ENCODE measurements at regions of chr15 and their contacts with region 1.

Region 1: DNA sequence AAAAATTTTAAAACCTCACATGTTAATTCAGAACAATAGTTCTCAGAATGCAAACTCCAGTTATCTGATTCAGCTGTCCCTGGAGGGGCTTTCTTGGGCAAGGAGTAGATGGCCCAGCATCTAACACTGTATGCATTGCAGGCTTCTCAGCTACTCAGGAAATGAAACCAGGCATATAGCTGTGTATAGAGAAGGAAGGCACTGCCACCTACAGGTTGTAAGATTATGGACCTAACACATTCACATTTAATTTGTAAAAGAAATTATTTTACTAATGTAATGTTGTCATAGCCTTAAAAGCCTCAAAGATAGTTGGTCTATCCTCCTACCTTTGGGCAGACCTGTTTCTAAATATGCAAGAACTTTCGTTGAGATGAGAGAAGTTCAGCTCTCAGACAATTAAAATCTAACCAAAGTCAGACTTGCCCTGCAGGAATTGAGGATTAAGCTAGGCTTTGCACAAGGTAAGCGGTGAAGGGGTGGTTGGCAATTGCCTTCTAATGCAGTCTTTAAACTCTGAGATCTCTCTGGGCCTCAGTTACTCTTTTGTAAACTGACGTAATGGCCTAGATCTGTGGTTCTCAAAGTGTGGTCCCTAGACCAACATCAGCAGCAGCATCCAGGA is 132.8 kb upstream of the SLC24A5 start:
- DNase-seq: peak in 2 of 5 donors; percentile 10 to 34
- H3K4me3 ChIP-seq: no peak overlapping the region
- H3K27ac ChIP-seq: no peak overlapping the region
- H3K4me1 ChIP-seq: no peaks in the 10 kb centered on the region
- H3K27me3 ChIP-seq: no peaks in the 10 kb centered on the region
- CTCF ChIP-seq: peak; percentile 69 to 73 (median 70)
- EP300 ChIP-seq: no peak
- POLR2A ChIP-seq: no peak

Region 2: GRCh38 chr15:47196057-47196456 is 792.0 kb before region 1 on chr15:
- intact Hi-C with region 1: loop called (anchors 2 to 10 kb)
- DNase-seq: peak; percentile 77 to 87 (median 81)
- H3K4me3 ChIP-seq: no peak overlapping the region
- H3K27ac ChIP-seq: no peak overlapping the region
- H3K4me1 ChIP-seq: no peaks in the 10 kb centered on the region
- H3K27me3 ChIP-seq: no peaks in the 10 kb centered on the region
- CTCF ChIP-seq: peak; percentile 52 to 85 (median 73)
- EP300 ChIP-seq: no peak
- POLR2A ChIP-seq: no peak

Region 3: DNA sequence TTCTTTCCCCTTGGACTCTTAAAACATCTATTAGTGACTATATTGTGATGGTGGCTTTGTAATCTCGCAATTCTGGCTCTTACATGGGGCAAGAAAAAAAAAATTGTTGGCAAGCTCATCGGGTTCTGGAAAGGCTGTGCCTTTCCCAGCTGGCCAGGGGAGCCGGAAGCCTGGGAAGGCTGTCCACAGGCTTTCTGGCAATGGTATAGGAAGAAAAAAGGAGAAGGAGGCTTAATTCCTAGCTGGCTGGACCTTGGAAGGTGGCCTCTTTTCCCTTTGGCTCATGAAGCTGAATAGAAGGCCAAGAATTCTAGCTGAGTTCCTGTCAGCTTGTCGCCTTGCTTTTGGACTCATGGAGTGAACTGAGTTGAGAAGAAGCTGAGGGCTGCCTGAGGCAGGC is 514.2 kb before region 1 on chr15:
- intact Hi-C with region 1: loop called in 3 of 4 experiments (anchors 5 to 10 kb)
- DNase-seq: peak; percentile 46 to 70 (median 65)
- H3K4me3 ChIP-seq: no peak overlapping the region
- H3K27ac ChIP-seq: peak overlapping the region in 1 of 2 donors; percentile 64
- H3K4me1 ChIP-seq: peaks cover 8% of the 10 kb centered on the region
- H3K27me3 ChIP-seq: no peaks in the 10 kb centered on the region
- CTCF ChIP-seq: no peak
- EP300 ChIP-seq: no peak
- POLR2A ChIP-seq: no peak

Region 4: GRCh38 chr15:48285329-48286214 is 297.6 kb after region 1 on chr15:
- intact Hi-C with region 1: loop called in 1 of 4 experiments (anchors 10 kb)
- DNase-seq: peak in 4 of 5 donors; percentile 23 to 65 (median 42)
- H3K4me3 ChIP-seq: peak overlapping the region; percentile 15
- H3K27ac ChIP-seq: no peak overlapping the region
- H3K4me1 ChIP-seq: peaks cover 3% of the 10 kb centered on the region
- H3K27me3 ChIP-seq: no peaks in the 10 kb centered on the region
- CTCF ChIP-seq: peak; percentile 30 to 75 (median 41)
- EP300 ChIP-seq: no peak
- POLR2A ChIP-seq: no peak